HEK293 (cell line): ENCODE measurements at regions of chr1 and their contacts with region 1.

Region 1: DNA sequence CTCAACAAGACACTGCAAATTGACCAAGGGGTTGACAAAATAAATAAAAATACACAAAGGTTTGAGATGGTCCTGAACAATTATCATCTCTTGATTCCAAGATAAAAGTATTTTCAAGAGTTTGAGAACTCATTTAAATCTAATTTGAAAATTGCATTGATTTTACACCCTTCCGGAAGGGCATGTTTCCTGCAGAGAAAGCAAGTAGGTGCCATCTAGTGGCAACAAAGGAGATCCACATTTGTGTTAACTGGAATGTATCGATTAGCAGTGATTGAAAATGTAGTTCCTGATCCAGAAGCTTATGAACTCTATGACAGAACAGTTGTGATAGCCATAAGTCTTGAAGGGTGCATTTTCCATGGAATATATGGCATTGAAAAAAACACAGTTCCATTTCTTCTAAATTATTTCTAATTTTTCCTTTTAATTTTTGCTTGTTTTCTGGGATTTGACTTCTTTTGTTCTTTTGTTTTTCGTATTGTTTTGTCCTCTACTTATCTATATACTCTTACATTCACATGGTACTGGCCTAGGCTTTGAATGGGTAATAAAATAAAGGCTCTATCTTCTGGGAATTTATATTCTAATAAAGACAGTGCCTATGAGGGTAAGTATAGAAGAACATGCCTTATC is 143.7 kb downstream of the DNM3 start:
- H3K4me3 ChIP-seq: no peak overlapping the region
- H3K27ac ChIP-seq: no peak overlapping the region
- H3K4me1 ChIP-seq: no peaks in the 10 kb centered on the region
- CTCF ChIP-seq: no peak

Region 2: DNA sequence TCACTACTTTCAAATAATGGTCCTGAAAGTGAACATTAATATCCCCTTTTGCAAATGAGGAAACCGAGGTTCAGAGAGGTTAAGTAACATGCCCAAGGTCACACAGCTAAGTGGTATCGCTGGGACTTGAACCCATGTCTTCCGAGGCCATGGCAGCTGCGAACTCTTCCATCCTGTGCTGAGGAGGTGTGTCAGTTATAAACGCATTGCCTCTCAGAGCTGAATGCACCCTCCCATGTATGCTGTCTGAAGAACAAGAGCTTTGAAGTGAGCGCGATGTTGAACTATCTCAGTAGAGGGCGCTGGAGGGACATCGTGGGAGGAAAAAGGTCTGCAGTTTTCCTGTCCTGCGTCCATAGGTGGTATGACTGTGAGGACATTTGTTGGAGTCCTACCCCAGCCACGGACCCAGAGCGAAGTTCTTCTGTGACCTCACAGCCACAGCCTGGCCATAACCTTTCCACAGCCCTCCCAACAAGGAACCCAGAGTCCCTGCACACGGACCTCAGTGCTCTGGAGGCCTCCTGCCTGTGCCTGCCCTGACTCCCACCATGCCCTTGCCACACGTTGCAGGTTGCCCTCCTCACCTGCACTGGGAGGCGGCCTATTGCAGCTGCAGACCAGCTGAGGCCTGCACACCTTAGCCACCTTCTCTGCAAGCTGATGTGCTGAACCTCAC is 340.0 kb before region 1 on chr1:
- CTCF ChIA-PET with region 1: interaction called, 59 read pairs
- POLR2A ChIA-PET with region 1: no interaction called
- H3K4me3 ChIP-seq: peak overlapping the region; percentile 3; the same call in 1 of the 2 replicates
- H3K27ac ChIP-seq: no peak overlapping the region
- H3K4me1 ChIP-seq: no peaks in the 10 kb centered on the region
- CTCF ChIP-seq: peak; percentile 88

Region 3: DNA sequence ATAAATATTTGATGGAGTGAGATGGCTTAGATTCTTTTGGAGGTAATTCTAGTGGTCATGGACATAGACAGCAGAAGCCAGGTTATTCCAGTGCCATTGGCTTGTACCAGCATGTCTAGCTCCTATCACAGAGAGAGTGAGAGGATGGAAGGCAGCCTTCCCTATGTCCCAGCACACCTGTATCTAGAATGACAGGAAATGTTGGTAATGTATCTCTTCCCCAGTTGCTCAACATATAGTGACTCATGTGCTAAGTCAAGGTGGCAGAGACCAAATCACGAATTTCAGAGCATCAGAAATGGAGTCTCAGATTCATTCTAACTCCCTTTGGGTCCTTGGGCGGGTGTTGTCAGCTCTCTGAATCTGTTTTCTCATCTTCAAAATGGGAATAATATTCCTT is 175.1 kb before region 1 on chr1:
- CTCF ChIA-PET with region 1: interaction called, 378 read pairs
- POLR2A ChIA-PET with region 1: no interaction called
- H3K4me3 ChIP-seq: no peak overlapping the region
- H3K27ac ChIP-seq: no peak overlapping the region
- H3K4me1 ChIP-seq: no peaks in the 10 kb centered on the region
- CTCF ChIP-seq: no peak

Region 4: GRCh38 chr1:171841050-171841940 is 143.7 kb before region 1 on chr1 and contains the start of gene DNM3:
- CTCF ChIA-PET with region 1: interaction called, 12 read pairs
- POLR2A ChIA-PET with region 1: interaction called, 4 read pairs
- H3K4me3 ChIP-seq: peak within 1 kb of the TSS; percentile 95
- H3K27ac ChIP-seq: peak within 1 kb of the TSS; percentile 43; the same call in 1 of the 2 replicates
- H3K4me1 ChIP-seq: no peaks in the 10 kb centered on the region
- CTCF ChIP-seq: no peak; the same call in 1 of the 2 replicates

Region 5: GRCh38 chr1:171965777-171966176 is 19.2 kb before region 1 on chr1:
- CTCF ChIA-PET with region 1: interaction called, 25 read pairs
- POLR2A ChIA-PET with region 1: no interaction called
- H3K4me3 ChIP-seq: no peak overlapping the region
- H3K27ac ChIP-seq: no peak overlapping the region
- H3K4me1 ChIP-seq: no peaks in the 10 kb centered on the region; the same call in 1 of the 2 replicates
- CTCF ChIP-seq: no peak

Region 6: GRCh38 chr1:172002725-172003345 is 17.9 kb after region 1 on chr1:
- CTCF ChIA-PET with region 1: interaction called, 31 read pairs
- POLR2A ChIA-PET with region 1: no interaction called
- H3K4me3 ChIP-seq: no peak overlapping the region
- H3K27ac ChIP-seq: no peak overlapping the region
- H3K4me1 ChIP-seq: no peaks in the 10 kb centered on the region
- CTCF ChIP-seq: no peak

Region 7: GRCh38 chr1:172041742-172042141 is 56.8 kb after region 1 on chr1:
- CTCF ChIA-PET with region 1: no interaction called
- POLR2A ChIA-PET with region 1: no interaction called
- H3K4me3 ChIP-seq: no peak overlapping the region
- H3K27ac ChIP-seq: no peak overlapping the region
- H3K4me1 ChIP-seq: no peaks in the 10 kb centered on the region
- CTCF ChIP-seq: no peak

Region 8: DNA sequence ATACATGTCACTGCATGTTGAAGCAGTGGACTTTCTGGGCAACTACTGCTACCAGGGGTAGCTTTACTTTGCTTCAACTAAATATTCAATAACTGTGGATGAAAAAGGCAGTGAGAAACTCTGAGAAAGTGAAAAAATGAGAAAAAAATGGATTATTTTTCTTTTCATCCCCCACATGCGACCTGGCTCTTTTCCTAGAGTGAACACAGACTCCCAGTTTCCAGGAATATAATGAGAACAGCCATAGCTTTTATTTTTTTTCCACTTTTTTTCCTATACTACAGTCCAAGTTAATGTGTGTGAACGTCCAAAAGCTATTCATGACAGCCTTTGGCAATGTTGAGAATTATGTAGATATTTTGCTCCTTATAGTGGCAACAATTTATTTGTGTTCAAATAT is 86.8 kb after region 1 on chr1:
- CTCF ChIA-PET with region 1: no interaction called
- POLR2A ChIA-PET with region 1: no interaction called
- H3K4me3 ChIP-seq: no peak overlapping the region
- H3K27ac ChIP-seq: no peak overlapping the region
- H3K4me1 ChIP-seq: no peaks in the 10 kb centered on the region
- CTCF ChIP-seq: no peak